Mammary epithelial cell (primary cell): ENCODE measurements at regions of chr18 and their contacts with region 1.

Region 1: GRCh38 chr18:63741769-63742168 is 33.4 kb upstream of the SERPINB7 start:
- DNase-seq: peak; percentile 40
- H3K4me3 ChIP-seq: no peak overlapping the region
- H3K27ac ChIP-seq: no peak overlapping the region
- H3K4me1 ChIP-seq: peaks cover 11% of the 10 kb centered on the region
- H3K27me3 ChIP-seq: no peaks in the 10 kb centered on the region
- CTCF ChIP-seq: peak; percentile 77 to 80

Region 2: DNA sequence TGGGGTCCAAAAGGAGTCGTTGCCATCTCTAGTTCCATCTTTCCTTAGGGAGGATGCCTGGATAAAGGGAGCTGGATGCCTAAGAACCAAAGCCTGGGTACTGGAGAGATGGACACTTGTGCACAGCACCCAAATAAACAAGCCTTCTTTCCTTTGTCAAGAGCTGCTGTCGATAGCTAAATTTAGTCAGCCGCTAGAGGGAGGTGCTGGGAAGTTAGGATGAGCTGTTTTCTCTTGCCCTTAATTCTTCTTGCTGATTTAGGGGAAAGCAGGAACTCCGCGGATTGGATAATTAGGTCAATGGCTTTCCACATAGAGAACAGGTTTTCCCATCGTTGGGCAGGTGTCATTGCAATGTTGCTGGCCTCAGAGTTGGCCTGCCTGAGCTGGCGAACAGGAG is 230.5 kb before region 1 on chr18:
- CTCF ChIA-PET with region 1: interaction called, 12 read pairs
- dilution Hi-C with region 1: no loop called
- in situ Hi-C with region 1: loop called in 1 of 2 experiments (anchors 10 kb)
- intact Hi-C with region 1: no loop called
- DNase-seq: no peak
- H3K4me3 ChIP-seq: no peak overlapping the region
- H3K27ac ChIP-seq: no peak overlapping the region
- H3K4me1 ChIP-seq: no peaks in the 10 kb centered on the region
- H3K27me3 ChIP-seq: no peaks in the 10 kb centered on the region
- CTCF ChIP-seq: peak; percentile 71 to 84

Region 3: GRCh38 chr18:63578357-63578958 is 163.3 kb before region 1 on chr18:
- CTCF ChIA-PET with region 1: interaction called, 5 read pairs
- dilution Hi-C with region 1: no loop called
- in situ Hi-C with region 1: no loop called
- intact Hi-C with region 1: loop called (anchors 2 kb)
- DNase-seq: no peak
- H3K4me3 ChIP-seq: no peak overlapping the region
- H3K27ac ChIP-seq: no peak overlapping the region
- H3K4me1 ChIP-seq: no peaks in the 10 kb centered on the region
- H3K27me3 ChIP-seq: no peaks in the 10 kb centered on the region
- CTCF ChIP-seq: peak; percentile 77 to 83

Region 4: DNA sequence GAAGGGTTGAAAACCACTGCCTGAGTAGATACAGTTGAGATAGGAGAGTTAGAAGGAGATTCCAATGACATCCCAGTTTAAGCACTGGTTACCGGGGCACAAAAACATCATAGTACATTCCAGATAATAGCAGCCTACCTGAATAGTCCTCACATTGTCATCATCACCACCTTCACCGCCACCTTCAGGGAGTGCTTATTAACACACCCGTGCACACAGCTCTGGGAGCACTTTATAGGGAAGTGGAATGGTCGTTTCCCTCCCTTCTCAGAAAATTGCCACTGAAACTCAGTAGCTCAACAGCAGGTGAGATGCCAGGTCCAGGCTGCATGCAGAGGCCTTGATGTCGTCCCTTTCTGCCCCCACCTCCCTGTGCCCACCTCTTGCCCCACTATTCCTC is 41.6 kb after region 1 on chr18:
- CTCF ChIA-PET with region 1: interaction called, 7 read pairs
- dilution Hi-C with region 1: no loop called
- in situ Hi-C with region 1: no loop called
- intact Hi-C with region 1: loop called (anchors 1 kb)
- DNase-seq: peak; percentile 53
- H3K4me3 ChIP-seq: no peak overlapping the region
- H3K27ac ChIP-seq: peak overlapping the region; percentile 35
- H3K4me1 ChIP-seq: peaks cover 25% of the 10 kb centered on the region
- H3K27me3 ChIP-seq: no peaks in the 10 kb centered on the region
- CTCF ChIP-seq: peak; percentile 60 to 65

Region 5: GRCh38 chr18:63795614-63796013 is 53.8 kb after region 1 on chr18:
- CTCF ChIA-PET with region 1: no interaction called
- dilution Hi-C with region 1: no loop called
- in situ Hi-C with region 1: no loop called
- intact Hi-C with region 1: no loop called
- DNase-seq: no peak
- H3K4me3 ChIP-seq: no peak overlapping the region
- H3K27ac ChIP-seq: no peak overlapping the region
- H3K4me1 ChIP-seq: no peaks in the 10 kb centered on the region
- H3K27me3 ChIP-seq: no peaks in the 10 kb centered on the region
- CTCF ChIP-seq: no peak

Region 6: DNA sequence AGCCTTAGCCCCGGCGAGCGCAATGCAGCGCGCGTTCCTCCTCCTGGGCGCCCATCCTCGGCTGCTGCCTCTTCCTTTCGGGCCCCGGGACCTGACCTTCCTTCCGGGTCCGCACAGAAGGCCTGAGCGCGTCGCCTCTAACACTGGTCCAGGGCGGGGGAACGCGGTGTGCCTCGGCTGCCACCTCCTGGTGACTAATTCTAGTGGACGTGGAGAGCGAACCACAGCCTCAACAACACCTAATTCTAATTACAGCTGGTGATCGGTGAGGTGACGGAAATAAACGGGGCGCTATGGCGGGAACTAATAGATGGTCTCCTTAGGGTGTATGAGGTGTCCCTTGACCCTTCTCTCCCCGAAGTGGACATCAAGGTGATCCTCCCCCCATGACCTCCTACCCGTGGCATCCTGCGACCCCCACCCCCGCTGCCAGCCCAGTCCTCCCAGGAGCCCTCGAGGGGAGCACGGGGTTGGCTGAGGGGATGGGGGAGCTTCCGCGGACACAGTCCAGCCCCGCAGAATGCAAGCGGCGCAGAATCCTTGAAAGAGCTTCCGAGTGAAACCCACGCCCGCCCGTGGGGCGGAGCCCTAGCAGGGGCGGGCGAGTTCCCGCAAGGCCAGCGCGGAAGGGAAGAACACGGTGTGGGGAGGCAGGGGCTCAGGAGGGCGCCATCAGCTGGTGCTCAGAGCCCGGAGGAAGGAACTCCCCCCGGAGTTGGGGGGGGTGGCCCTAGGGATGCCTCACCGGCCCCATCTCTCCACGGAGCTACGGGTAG is 194.6 kb after region 1 on chr18:
- CTCF ChIA-PET with region 1: no interaction called
- dilution Hi-C with region 1: no loop called
- in situ Hi-C with region 1: no loop called
- intact Hi-C with region 1: loop called (anchors 5 kb)
- DNase-seq: peak; percentile 70
- H3K4me3 ChIP-seq: peak overlapping the region; percentile 60 to 81 (median 62)
- H3K27ac ChIP-seq: no peak overlapping the region
- H3K4me1 ChIP-seq: peaks cover 12% of the 10 kb centered on the region
- H3K27me3 ChIP-seq: no peaks in the 10 kb centered on the region
- CTCF ChIP-seq: peak; percentile 67 to 88

Region 7: GRCh38 chr18:64017870-64018269 is 276.1 kb after region 1 on chr18:
- CTCF ChIA-PET with region 1: no interaction called
- dilution Hi-C with region 1: no loop called
- in situ Hi-C with region 1: no loop called
- intact Hi-C with region 1: no loop called
- DNase-seq: peak; percentile 11
- H3K4me3 ChIP-seq: no peak overlapping the region
- H3K27ac ChIP-seq: no peak overlapping the region
- H3K4me1 ChIP-seq: peaks cover 3% of the 10 kb centered on the region
- H3K27me3 ChIP-seq: peaks cover 2% of the 10 kb centered on the region
- CTCF ChIP-seq: peak; percentile 26 to 56